Mammary epithelial cell (primary cell): ENCODE measurements at regions of chr17 and their contacts with region 1.

Region 1: GRCh38 chr17:58417300-58418092 is at the start of gene RNF43:
- DNase-seq: peak; percentile 98
- H3K4me3 ChIP-seq: peak within 1 kb of the TSS; percentile 63 to 86 (median 75)
- H3K27ac ChIP-seq: peak within 1 kb of the TSS; percentile 86
- H3K4me1 ChIP-seq: peaks cover 10% of the 10 kb centered on the region
- H3K27me3 ChIP-seq: peaks cover 3% of the 10 kb centered on the region
- CTCF ChIP-seq: peak; percentile 87 to 98
- total RNA-seq, gene RNF43: 9.3 to 11.4 TPM

Region 2: DNA sequence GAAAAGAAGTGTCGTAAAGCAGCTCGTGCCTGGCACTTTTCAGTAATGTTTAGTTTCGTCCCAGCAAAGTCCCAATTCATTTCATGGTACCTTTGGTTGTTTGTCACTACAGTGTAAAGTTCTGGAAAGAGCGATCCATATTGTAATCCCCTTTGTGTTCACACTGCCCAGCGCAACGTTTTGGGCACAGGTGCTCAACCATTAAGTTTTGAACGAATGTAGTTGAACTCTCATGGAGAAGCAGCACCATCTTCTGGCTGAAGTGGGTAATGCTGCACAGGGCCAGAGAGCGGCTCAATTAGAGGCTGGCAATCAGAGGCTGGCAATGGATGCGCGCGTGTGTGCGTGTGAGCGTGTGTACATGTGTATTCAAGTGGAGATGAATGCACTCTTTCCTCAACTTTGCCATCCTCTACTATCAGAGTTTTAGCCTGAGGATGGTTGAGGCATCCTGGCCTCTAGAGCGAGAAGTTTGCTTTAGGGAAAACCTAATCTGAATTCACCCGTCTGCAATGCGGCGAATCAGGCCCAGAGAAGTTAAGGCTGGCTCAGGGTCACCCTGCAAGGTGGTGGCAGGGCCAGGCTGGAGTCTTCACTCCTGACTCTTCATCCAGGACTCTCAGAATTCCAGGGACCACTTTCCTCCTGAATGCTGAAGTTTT is 304.4 kb before region 1 on chr17:
- CTCF ChIA-PET with region 1: no interaction called
- dilution Hi-C with region 1: no loop called
- in situ Hi-C with region 1: no loop called
- intact Hi-C with region 1: no loop called
- DNase-seq: peak; percentile 55
- H3K4me3 ChIP-seq: no peak overlapping the region
- H3K27ac ChIP-seq: no peak overlapping the region
- H3K4me1 ChIP-seq: no peaks in the 10 kb centered on the region
- H3K27me3 ChIP-seq: no peaks in the 10 kb centered on the region
- CTCF ChIP-seq: peak; percentile 95 to 98

Region 3: DNA sequence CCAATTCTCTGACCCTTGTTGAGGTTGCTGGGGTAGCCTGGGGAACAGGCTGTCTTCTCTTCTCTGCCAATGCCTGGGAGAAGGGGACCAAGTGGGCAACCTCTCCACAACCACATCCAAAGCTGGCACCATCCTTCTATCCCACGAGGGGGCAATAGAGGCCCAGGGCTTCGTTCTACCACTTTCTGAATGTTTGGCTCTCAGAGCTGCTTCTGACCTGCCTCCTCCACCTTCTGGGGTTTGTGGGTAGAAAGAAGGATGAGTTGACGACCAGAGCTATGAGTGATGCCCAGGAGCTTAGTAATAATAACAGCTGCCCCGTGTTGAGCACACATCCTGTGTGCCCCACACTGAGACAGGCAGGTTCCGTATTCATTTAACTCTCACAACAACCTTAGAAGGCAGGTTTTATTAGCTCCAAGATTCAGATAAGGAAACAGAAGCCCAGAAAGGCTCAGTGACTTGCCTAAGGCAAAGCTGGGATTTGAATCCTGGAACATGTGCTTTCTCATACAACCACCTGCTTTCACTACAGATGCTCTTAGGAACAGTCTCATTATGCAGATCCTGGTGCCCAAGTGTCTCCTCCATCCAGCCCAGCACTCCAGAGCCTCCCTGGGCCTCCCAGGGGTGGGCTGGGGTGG is 100.0 kb before region 1 on chr17:
- CTCF ChIA-PET with region 1: interaction called, 55 read pairs
- dilution Hi-C with region 1: no loop called
- in situ Hi-C with region 1: no loop called
- intact Hi-C with region 1: loop called (anchors 1 kb)
- DNase-seq: peak; percentile 90
- H3K4me3 ChIP-seq: no peak overlapping the region
- H3K27ac ChIP-seq: no peak overlapping the region
- H3K4me1 ChIP-seq: peaks cover 6% of the 10 kb centered on the region
- H3K27me3 ChIP-seq: no peaks in the 10 kb centered on the region
- CTCF ChIP-seq: peak; percentile 92 to 93

Region 4: DNA sequence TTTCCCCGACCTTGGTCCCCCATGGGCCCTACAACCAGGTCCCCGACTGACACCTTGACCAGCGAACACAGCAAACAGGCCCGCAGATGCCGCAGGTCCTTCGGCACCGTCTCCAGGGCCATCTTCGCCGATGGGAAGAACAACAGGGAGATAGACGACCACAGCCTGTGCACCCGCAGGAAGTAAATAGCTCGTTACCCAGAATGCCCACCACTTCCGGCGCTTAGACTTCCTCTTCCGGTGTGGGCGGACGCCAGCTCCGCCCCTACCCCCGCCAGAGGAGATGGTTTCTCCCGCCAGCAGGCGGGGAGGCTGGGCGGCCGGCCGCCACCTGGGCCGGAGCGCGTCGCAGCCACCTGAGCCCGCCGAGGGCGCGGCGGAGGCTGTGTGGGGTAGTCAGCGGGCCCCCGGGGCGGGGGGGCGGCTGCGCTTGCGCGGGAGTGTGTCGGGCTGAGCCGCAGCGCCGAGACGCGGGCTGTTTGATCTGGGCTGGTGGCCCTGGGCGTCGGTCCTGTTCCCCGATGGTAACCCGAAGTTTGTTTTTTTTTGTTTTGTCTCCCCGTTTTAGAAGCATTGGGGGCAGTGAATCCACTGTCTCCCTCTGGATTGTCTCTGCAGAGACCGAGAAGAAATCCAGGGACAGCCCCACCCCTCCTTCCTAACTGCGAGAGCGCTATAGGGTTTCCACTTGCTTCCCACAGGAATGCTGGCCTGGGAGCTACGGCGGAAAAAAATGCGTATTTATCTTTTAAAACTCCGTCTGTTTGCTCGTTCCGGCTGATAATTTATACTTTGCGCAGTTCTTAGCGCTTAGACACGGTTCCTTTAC is 65.3 kb before region 1 on chr17 and contains the start of gene SUPT4H1:
- CTCF ChIA-PET with region 1: interaction called, 20 read pairs
- dilution Hi-C with region 1: no loop called
- in situ Hi-C with region 1: loop called (anchors 5 to 10 kb)
- intact Hi-C with region 1: loop called (anchors 1 kb)
- DNase-seq: peak; percentile 95
- H3K4me3 ChIP-seq: peak within 1 kb of the TSS; percentile 80 to 96 (median 88)
- H3K27ac ChIP-seq: peak within 1 kb of the TSS; percentile 86
- H3K4me1 ChIP-seq: peaks cover 14% of the 10 kb centered on the region
- H3K27me3 ChIP-seq: no peaks in the 10 kb centered on the region
- CTCF ChIP-seq: peak in 1 of 2 donors; percentile 1
- total RNA-seq, gene SUPT4H1: 32.3 to 55.3 TPM

Region 5: DNA sequence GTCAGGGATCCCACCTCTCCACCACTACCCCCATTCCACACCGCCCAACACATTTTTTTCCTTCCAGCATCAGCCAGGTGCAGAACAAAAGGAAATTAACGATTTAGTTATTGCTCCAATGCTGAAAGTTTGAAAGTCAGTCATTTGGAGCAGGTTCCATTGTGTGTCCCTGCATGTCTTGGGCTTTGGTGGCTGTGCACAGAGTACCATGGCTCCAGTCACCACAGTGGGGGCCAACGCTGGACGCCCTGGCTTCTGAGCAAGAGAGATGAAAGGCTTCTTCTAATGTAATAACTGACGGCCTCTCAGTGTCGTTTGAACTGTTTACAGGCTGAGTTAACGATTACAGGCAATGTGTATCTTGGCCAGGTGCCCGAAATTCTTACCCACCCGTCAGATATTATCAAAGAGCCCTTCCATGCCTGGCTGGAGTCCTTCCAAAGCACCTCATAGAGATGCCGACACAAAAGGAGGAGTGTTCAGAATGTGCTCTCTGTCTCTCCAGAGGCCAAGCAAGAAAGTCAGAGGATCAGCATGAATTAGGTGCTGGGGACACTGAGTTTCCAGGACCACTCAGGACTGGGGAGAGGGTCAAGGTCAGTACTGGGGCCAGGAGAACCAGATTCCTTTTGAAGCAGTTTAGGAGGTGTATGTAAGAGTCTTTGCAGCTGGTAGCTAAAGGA is 26.1 kb before region 1 on chr17:
- CTCF ChIA-PET with region 1: interaction called, 9 read pairs
- dilution Hi-C with region 1: no loop called
- in situ Hi-C with region 1: no loop called
- intact Hi-C with region 1: loop called (anchors 1 kb)
- DNase-seq: peak; percentile 91
- H3K4me3 ChIP-seq: no peak overlapping the region
- H3K27ac ChIP-seq: no peak overlapping the region
- H3K4me1 ChIP-seq: peaks cover 29% of the 10 kb centered on the region
- H3K27me3 ChIP-seq: no peaks in the 10 kb centered on the region
- CTCF ChIP-seq: no peak

Region 6: DNA sequence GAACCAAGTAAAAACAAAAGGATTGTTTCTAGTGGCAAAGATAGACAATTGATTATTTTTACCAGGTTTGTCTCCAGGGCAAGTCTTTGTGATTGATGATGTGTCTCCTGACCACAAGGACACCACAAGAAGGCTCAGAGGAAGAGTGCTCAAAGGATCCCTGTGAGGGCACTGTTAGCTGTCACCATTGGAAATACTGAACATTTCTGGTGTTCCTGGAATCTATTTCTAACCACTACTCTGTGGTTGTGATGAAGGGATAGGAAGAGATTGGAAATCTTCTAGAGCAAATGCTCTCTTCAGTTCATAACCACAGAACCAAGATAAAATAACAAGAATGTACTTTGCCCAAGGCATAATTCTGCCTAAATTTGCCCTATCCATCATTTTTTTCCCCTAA is 15.4 kb before region 1 on chr17:
- CTCF ChIA-PET with region 1: no interaction called
- dilution Hi-C with region 1: no loop called
- in situ Hi-C with region 1: no loop called
- intact Hi-C with region 1: loop called (anchors 1 kb)
- DNase-seq: peak; percentile 72
- H3K4me3 ChIP-seq: peak overlapping the region in 1 of 3 experiments; percentile 3
- H3K27ac ChIP-seq: peak overlapping the region; percentile 96
- H3K4me1 ChIP-seq: peaks cover 55% of the 10 kb centered on the region
- H3K27me3 ChIP-seq: no peaks in the 10 kb centered on the region
- CTCF ChIP-seq: no peak

Region 7: DNA sequence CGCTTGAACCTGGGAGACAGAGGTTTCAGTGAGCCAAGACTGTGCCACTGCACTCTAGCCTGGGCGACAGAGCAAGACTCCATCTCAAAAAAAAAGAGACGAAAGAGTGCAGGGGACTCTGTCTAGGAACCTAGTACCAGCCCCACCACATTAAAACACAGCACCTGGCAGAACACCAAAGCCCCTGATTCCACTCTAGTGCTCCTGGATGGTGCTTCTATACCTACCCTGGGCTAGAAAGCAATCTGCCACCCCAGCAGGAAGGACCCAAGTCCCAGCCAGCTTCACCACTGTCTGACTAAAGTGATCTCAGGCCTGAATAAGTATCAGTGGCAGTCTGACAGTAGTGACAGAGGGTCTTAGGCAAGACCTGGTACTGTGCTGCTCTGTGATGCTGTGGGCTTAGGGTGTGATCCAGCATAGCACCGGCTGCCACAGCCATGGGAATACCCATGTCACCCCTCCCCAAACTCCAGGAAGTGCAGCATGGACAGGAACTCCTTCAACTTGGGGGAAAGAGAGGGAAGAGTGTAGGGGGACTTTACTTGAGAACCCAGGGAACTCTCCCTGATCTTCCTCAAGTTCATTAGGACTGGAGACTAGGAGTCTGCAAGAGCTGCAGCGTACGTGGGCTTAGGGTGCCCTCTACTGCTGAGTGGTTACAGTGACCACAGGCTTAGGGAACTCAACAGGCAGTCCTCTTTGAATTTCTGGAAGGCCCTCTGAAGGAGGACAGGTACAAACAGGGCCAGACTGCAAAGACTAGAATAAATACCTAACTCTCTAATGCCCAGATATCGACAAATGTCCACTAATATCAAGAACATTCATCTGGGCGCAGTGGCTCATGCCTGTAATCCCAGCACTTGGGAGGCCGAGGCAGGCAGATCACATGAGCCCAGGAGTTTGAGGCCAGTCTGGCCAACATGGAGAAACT is 29.8 kb after region 1 on chr17:
- CTCF ChIA-PET with region 1: no interaction called
- dilution Hi-C with region 1: no loop called
- in situ Hi-C with region 1: no loop called
- intact Hi-C with region 1: loop called (anchors 1 kb)
- DNase-seq: peak; percentile 68
- H3K4me3 ChIP-seq: no peak overlapping the region
- H3K27ac ChIP-seq: no peak overlapping the region
- H3K4me1 ChIP-seq: no peaks in the 10 kb centered on the region
- H3K27me3 ChIP-seq: no peaks in the 10 kb centered on the region
- CTCF ChIP-seq: peak; percentile 79 to 96

Region 8: GRCh38 chr17:58463821-58464220 is 46.3 kb after region 1 on chr17:
- CTCF ChIA-PET with region 1: no interaction called
- dilution Hi-C with region 1: no loop called
- in situ Hi-C with region 1: no loop called
- intact Hi-C with region 1: no loop called
- DNase-seq: no peak
- H3K4me3 ChIP-seq: no peak overlapping the region
- H3K27ac ChIP-seq: no peak overlapping the region
- H3K4me1 ChIP-seq: no peaks in the 10 kb centered on the region
- H3K27me3 ChIP-seq: no peaks in the 10 kb centered on the region
- CTCF ChIP-seq: no peak